ENCODE measurements at regions of chr22 and their contacts with region 1.

Region 1: DNA sequence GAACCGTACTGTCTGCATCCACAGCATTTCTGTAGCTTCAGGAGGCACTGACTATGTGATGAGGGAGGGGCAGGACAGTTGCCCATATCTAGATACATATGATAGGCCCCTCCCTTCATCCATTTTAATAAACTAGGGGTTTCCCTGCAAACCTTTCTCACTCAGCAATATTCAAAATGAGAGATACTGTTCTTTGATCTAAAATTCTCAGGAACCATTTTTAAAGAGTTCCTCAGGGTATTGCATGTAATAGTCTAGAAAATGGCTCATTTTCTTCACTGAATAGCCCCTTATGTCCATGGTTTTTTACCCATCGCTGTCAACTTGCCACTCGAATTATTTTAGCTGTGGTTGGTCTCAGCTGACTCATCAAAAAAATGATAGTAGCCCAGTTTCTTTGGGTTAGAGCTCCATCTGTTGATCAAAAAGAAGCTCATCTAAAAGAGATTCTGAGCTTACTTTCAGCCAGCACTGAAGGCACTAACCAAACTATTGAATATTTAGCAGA is 37.0 kb upstream of the DNAJB7 start:
- DNase-seq: peak; percentile 77
- H3K4me3 Mint-ChIP-seq: peak overlapping the region; percentile 34
- H3K27ac Mint-ChIP-seq: peak overlapping the region; percentile 80
- H3K4me1 Mint-ChIP-seq: peaks cover 8% of the 10 kb centered on the region
- H3K27me3 Mint-ChIP-seq: no peaks in the 10 kb centered on the region

Region 2: GRCh38 chr22:40436505-40437451 is 462.1 kb before region 1 on chr22:
- intact Hi-C with region 1: loop called (anchors 10 kb)
- DNase-seq: peak; percentile 72
- H3K4me3 Mint-ChIP-seq: no peak overlapping the region
- H3K27ac Mint-ChIP-seq: peak overlapping the region; percentile 77
- H3K4me1 Mint-ChIP-seq: peaks cover 36% of the 10 kb centered on the region
- H3K27me3 Mint-ChIP-seq: no peaks in the 10 kb centered on the region

Region 3: GRCh38 chr22:40651563-40652501 is 247.1 kb before region 1 on chr22:
- intact Hi-C with region 1: loop called (anchors 2 kb)
- DNase-seq: peak; percentile 91
- H3K4me3 Mint-ChIP-seq: peak overlapping the region; percentile 55
- H3K27ac Mint-ChIP-seq: peak overlapping the region; percentile 85
- H3K4me1 Mint-ChIP-seq: peaks cover 22% of the 10 kb centered on the region
- H3K27me3 Mint-ChIP-seq: no peaks in the 10 kb centered on the region

Region 4: DNA sequence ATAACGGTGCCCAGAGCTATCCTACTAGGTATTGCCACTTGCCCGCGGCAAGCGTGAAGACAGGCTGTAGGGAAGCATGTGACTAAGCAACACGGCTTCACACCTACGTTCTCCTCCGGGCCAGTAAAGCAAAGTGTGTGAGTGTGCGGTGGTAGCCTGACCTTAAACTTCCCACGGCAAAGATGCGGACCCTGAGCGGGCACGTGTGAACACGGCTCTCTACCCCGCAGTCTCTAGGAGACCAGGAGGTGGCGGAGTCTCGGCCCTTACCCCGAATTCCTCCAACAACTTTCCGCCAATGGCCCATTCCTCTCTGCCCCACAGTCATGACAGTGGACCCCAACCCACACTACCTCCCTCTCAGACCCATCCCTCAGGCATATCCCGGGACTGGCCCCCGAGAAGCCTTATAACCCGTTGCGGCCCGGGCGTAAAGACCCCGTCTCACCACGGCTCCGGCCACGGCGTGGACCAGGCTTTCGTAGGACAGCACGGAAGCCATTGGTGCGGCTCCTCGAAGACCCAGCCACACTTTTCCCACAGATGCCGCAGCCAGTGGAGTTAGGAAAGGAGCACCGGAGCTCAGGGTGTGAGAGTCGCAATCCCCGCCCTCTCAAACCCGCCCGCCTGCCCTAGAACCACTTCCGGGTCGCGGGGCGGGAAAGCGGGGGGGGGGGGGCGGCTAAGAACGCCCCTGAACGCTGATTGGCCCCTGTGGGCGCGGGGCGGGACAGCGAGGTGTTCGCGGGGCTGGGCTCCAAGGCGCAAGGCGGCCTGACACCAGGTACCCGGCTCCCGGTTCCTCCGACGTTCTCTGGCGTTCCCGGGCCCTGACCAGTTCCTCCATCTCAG is 79.9 kb before region 1 on chr22 and contains the start of gene SLC25A17:
- intact Hi-C with region 1: loop called (anchors 2 kb)
- DNase-seq: peak; percentile 96
- H3K4me3 Mint-ChIP-seq: peak within 1 kb of the TSS; percentile 92
- H3K27ac Mint-ChIP-seq: peak within 1 kb of the TSS; percentile 94
- H3K4me1 Mint-ChIP-seq: peaks cover 30% of the 10 kb centered on the region
- H3K27me3 Mint-ChIP-seq: no peaks in the 10 kb centered on the region
- total RNA-seq, gene SLC25A17: 32.8 and 37.7 TPM in 2 replicates

Region 5: DNA sequence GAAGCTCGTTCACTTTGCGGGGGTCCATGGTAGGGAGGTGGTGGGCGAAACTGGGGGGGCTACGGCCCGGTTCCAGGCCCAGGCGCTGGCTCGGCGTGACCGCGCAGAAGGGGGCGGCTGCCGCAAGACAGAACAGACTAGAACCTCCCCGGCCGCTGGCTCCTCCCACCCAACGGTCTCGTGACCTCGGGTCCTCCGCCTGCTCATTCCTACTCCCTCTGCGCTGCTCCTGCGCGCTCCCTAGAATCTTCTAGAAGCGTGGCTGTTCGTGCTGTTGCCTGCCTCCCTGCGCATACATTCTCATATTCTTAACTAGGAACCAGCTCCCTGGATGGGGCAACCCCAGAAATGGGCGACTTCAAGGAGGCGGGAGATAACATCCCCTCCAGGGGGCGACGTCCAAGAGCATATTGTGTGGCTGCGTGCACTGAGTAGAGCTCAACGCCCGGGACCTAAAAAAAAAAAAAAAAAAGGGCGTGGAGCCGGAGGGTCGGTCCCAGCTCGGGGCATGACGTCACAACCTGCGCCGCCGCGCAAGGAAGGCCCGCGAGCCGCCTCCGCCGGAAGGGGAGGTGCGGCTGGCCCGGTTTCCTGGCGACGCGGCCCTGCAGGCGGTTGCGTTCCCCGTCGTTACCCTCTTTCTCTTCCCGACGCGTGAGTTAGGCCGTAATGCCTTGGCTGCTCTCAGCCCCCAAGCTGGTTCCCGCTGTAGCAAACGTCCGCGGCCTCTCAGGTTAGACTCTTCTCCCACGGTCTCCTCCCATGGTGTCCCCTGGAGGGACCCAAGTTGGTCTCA is 42.2 kb before region 1 on chr22 and contains the starts of genes ST13 and XPNPEP3:
- intact Hi-C with region 1: loop called (anchors 2 kb)
- DNase-seq: peak; percentile 99
- H3K4me3 Mint-ChIP-seq: peak within 1 kb of the TSS; percentile 96
- H3K27ac Mint-ChIP-seq: peak within 1 kb of the TSS; percentile 100
- H3K4me1 Mint-ChIP-seq: peaks cover 42% of the 10 kb centered on the region
- H3K27me3 Mint-ChIP-seq: peaks cover 2% of the 10 kb centered on the region
- total RNA-seq, gene ST13: 210 and 215 TPM in 2 replicates
- total RNA-seq, gene XPNPEP3: 17.6 and 17.7 TPM in 2 replicates

Measured in activated CD4-positive, alpha-beta T cell treated with anti-CD3 and anti-CD28 coated beads, Interleukin-2, amount 10 ng/mL, durations not matched to agents 24 days and 14 days (primary cell).